Esophagus muscularis mucosa (tissue), 4 donors: ENCODE measurements at regions of chr3 and their contacts with region 1.

Region 1: DNA sequence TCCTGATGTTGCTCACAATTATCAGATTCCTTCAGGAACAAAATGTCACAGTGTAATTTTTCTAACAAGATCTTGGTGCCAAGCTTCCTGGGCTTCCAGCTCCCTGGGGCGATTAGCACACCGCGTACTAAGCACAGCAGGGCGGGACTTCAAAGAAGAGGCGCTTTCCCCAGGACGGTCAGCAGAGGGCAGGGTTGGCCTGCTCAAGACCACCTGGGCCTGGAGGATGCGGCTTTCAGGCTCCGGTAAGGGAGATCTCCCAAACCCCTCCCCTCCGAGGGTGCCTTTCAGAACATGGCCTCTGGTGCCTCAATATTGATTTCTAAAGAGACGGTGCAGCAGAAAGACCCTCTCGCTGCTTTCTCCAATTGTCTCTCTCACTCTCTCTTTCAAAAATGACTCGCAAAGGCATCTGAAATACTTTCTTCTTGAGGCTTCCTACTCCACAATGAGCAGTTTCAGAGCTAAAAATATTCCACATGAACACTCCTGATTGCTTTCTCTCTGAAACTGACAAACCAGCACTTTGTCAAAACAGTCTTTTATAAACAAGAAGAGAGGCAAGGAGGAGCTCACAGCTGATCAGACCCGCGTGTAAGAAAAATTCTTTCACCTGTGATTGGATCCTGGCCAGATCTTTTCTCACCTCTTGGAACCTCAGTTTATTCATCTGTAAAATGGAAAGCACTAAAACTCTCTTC is 154.0 kb downstream of the ADAMTS9 start:
- DNase-seq: peak; percentile 95
- H3K4me3 ChIP-seq: peak overlapping the region in 3 of 4 donors; percentile 9 to 29 (median 28)
- H3K27ac ChIP-seq: peak overlapping the region; percentile 58 to 83 (median 70)
- H3K4me1 ChIP-seq: peaks cover 13 to 53% (median 38%) of the 10 kb centered on the region in 4 donors
- H3K27me3 ChIP-seq: no peaks in the 10 kb centered on the region
- CTCF ChIP-seq: peak; percentile 89 to 94 (median 93)
- EP300 ChIP-seq: peak; percentile 47
- POLR2A ChIP-seq: no peak

Region 2: DNA sequence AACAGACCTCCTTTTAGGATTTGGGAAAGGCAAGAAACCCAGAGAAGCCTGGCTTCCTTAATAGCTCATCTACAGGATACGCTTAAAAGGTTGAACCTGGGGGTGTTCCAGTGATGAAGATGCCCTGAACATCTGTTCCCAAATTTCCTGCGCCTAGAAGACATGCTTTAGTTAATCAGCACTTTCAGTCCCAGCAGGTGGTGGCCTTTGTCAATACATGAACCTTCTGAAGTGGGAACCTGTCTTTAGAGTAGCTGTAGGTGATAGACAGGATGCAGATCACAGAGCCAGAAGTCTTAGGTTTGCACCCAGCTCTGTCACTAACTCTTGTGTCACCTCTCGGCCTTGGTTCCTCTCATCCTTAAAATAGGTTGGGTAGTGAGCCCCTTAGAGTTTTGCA is 1405.4 kb before region 1 on chr3:
- intact Hi-C with region 1: no loop called
- DNase-seq: no peak
- H3K4me3 ChIP-seq: no peak overlapping the region
- H3K27ac ChIP-seq: no peak overlapping the region
- H3K4me1 ChIP-seq: no peaks in the 10 kb centered on the region
- H3K27me3 ChIP-seq: no peaks in the 10 kb centered on the region
- CTCF ChIP-seq: no peak
- EP300 ChIP-seq: no peak
- POLR2A ChIP-seq: no peak

Region 3: GRCh38 chr3:64340641-64341101 is 193.1 kb before region 1 on chr3:
- intact Hi-C with region 1: no loop called
- DNase-seq: peak; percentile 50
- H3K4me3 ChIP-seq: peak overlapping the region in 3 of 4 donors; percentile 0 to 23 (median 21)
- H3K27ac ChIP-seq: peak overlapping the region; percentile 70 to 85 (median 75)
- H3K4me1 ChIP-seq: peaks cover 17 to 51% (median 48%) of the 10 kb centered on the region in 4 donors
- H3K27me3 ChIP-seq: no peaks in the 10 kb centered on the region
- CTCF ChIP-seq: no peak
- EP300 ChIP-seq: no peak
- POLR2A ChIP-seq: no peak

Region 4: GRCh38 chr3:64685800-64686445 is 152.2 kb after region 1 on chr3:
- intact Hi-C with region 1: loop called (anchors 5 kb)
- DNase-seq: peak; percentile 96
- H3K4me3 ChIP-seq: peak overlapping the region; percentile 74 to 84 (median 76)
- H3K27ac ChIP-seq: peak overlapping the region; percentile 97 to 98 (median 97)
- H3K4me1 ChIP-seq: peaks cover 8 to 48% (median 42%) of the 10 kb centered on the region in 4 donors
- H3K27me3 ChIP-seq: peaks cover 0 to 3% (median 0%) of the 10 kb centered on the region in 4 donors
- CTCF ChIP-seq: peak; percentile 50 to 64 (median 62)
- EP300 ChIP-seq: no peak
- POLR2A ChIP-seq: peak; percentile 57

Region 5: DNA sequence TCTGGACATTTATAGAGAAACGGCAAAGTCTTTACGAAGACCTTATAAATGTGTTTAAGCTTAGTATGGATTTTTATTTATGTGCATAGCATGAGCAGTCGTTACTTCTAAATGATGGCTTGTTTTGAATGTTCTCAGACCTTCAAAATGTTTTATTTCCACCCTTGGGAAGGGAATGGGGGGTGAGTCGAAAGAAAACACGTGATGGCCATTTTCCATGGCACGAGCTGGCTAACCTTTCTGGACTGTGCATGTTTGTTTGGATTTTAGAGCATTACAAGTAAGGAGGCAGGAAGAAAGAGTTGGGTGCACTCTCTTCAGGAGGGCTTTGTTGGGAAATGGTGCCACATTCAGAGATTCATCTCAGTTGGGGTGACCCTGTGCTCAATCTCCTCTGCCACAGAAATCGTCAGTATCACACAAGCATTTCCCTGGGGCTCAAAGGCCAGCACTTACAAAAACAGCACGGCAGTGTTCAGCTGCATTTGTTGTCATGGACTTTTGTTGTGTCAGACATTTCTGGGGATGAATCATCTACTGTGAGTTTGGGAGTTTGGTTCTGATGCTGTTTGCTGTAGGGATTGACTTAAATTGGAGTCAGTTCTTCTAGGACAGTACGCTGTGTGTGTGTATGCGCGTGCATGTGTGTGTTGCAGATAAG is 206.3 kb after region 1 on chr3:
- intact Hi-C with region 1: loop called (anchors 10 kb)
- DNase-seq: no peak
- H3K4me3 ChIP-seq: no peak overlapping the region
- H3K27ac ChIP-seq: peak overlapping the region; percentile 15 to 42 (median 39)
- H3K4me1 ChIP-seq: peaks cover 0 to 34% (median 32%) of the 10 kb centered on the region in 4 donors
- H3K27me3 ChIP-seq: no peaks in the 10 kb centered on the region
- CTCF ChIP-seq: no peak
- EP300 ChIP-seq: no peak
- POLR2A ChIP-seq: no peak

Region 6: DNA sequence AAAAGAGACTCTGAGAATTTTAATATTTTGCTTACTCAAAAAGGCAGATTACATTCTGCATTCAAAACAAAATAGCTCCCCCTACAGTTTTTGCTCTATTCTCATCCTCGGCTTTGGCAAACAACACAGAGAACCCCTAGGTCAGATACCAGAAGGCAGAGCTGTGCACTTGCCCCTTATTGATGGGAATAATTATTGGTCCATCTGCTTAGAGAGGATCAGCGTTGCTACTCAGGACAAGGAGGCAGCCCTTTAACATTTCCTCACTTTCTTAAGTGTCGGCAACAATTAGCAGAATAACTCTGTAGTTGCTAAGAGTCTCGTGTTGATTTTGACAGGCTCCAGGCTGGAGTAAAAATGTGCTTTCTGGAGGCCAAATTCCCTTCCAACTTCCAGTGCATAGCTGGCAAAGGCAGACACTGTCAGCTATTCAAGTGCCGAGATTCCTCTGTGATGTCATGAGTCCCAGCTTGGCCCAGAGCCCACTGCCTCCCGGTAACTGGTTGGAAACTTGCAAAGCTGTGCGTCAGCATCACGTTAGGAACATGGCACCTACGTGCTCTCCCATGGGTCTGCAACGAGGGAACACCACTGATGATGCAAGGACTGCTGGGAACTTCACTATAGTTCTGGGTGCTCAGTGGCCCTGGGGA is 636.7 kb after region 1 on chr3:
- intact Hi-C with region 1: loop called (anchors 5 kb)
- DNase-seq: peak; percentile 95
- H3K4me3 ChIP-seq: peak overlapping the region in 2 of 4 donors; percentile 11 to 21
- H3K27ac ChIP-seq: peak overlapping the region; percentile 72 to 82 (median 74)
- H3K4me1 ChIP-seq: peaks cover 22 to 31% (median 25%) of the 10 kb centered on the region in 4 donors
- H3K27me3 ChIP-seq: no peaks in the 10 kb centered on the region
- CTCF ChIP-seq: peak; percentile 46 to 53 (median 47)
- EP300 ChIP-seq: peak; percentile 100
- POLR2A ChIP-seq: no peak

Region 7: DNA sequence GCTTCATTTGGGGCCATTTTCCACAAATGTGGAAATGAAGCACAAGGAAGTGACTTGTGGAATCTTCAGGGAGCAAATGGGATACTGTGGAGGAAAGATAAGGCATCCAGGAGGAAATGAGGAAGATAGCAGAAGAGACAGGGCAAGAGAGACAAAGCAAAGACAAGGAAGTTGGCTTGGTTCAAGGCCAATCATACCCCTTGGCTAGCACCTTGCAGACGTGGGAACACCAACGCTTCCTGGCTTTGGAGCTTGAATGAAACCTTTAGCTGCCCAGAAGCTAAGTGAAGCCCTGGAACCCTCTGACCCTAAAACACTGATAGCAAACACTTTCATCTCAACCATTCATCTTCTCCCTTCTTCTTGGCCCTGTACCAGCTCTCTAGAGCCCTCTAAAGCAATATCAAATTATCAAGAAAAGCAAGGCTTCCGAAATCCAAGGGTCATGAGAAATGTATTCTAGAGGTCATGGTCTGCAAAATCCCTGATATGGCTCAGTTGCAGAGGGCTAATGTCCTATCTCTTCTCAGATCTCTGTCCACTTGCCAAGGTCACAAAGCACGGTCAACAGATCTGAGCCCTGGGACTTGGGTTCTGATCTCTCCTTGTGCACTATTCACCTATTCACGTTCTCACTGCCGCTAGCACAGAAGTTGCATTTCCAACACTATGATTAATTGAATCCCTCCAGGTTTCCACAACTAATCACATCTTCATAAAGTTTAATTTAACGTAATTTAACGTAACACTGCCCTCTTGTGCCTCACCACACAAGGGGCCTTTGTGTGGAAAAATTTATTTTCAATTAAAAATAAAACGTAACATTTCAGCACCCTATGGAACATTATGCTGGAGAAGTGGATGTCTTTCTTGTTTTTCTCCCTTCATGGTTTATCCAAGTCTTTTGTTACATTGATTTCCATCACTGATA is 711.6 kb after region 1 on chr3:
- intact Hi-C with region 1: loop called (anchors 5 kb)
- DNase-seq: no peak
- H3K4me3 ChIP-seq: no peak overlapping the region
- H3K27ac ChIP-seq: no peak overlapping the region
- H3K4me1 ChIP-seq: peaks cover 0 to 9% (median 3%) of the 10 kb centered on the region in 4 donors
- H3K27me3 ChIP-seq: no peaks in the 10 kb centered on the region
- CTCF ChIP-seq: peak; percentile 57 to 66 (median 60)
- EP300 ChIP-seq: no peak
- POLR2A ChIP-seq: no peak

Region 8: GRCh38 chr3:65732051-65732935 is 1198.5 kb after region 1 on chr3:
- intact Hi-C with region 1: loop called (anchors 10 kb)
- DNase-seq: no peak
- H3K4me3 ChIP-seq: no peak overlapping the region
- H3K27ac ChIP-seq: no peak overlapping the region
- H3K4me1 ChIP-seq: peaks cover 16 to 31% (median 24%) of the 10 kb centered on the region in 4 donors
- H3K27me3 ChIP-seq: no peaks in the 10 kb centered on the region
- CTCF ChIP-seq: peak; percentile 66 to 82 (median 70)
- EP300 ChIP-seq: no peak
- POLR2A ChIP-seq: no peak